PC-3 (cell line): ENCODE measurements at regions of chr4 and their contacts with region 1.

Region 1: DNA sequence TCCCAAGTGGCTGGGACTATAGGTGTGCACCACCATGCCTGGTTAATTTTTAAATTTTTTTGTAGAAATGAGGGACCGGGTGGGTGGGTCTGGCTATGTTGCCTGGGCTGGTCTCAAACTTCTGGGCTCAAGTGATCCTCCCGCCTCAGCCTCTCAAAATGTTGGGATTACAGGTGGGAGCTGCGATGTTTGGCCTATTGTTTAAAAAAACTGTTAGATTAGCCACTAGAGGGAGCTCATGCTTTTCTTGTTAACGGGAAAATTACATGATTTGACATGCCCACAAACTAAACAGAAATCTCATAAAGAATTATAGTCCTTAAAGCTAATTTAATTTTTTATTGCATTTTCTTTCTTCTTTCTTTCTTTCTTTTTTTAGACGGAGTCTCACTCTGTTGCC is 5.0 kb upstream of the SDAD1 start:
- DNase-seq: peak; percentile 73
- ATAC-seq: peak; percentile 35; the same call in 1 of the 2 replicates
- H3K4me3 ChIP-seq: no peak overlapping the region
- H3K27ac ChIP-seq: no peak overlapping the region
- H3K4me1 ChIP-seq: no peaks in the 10 kb centered on the region
- H3K27me3 ChIP-seq: no peaks in the 10 kb centered on the region
- CTCF ChIP-seq: peak; percentile 57

Region 2: DNA sequence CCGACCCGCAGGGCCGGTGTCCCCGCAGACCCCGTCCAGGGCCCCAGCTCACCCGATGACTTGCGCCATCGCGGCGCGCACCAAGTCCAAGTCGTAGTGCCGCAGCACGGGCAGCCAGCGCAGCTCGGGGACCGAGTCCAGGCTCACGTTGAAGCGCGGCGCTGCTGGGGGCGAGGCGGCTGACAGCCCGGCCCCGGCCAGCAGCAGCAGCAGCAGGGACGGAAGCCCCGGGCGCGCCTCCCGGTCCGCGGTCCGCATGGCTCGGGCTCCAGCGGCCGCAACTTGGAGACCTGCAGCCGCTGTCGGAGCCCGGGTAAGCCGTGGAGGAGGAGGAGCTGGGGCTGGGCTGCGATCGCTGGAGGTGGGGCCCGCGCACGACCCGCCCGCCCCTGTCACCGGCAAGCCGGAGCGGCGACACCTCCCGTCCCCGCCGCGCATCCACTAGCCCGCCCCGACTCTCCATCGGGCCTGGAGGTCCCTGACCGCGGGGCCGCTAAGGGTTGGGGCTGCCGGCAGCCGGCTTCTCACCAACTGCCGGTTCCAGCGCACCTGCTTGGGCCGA is 55.0 kb before region 1 on chr4 and contains the start of gene NAAA:
- CTCF ChIA-PET with region 1: interaction called, 15 read pairs
- POLR2A ChIA-PET with region 1: no interaction called
- intact Hi-C with region 1: no loop called
- DNase-seq: peak; percentile 55
- ATAC-seq: peak; percentile 87
- H3K4me3 ChIP-seq: peak within 1 kb of the TSS; percentile 98
- H3K27ac ChIP-seq: no peak within 1 kb of the TSS; the same call in 1 of the 2 replicates
- H3K4me1 ChIP-seq: no peaks in the 10 kb centered on the region
- H3K27me3 ChIP-seq: no peaks in the 10 kb centered on the region
- CTCF ChIP-seq: no peak
- total RNA-seq, gene NAAA: 21.9 and 48.6 TPM in 2 replicates

Region 3: DNA sequence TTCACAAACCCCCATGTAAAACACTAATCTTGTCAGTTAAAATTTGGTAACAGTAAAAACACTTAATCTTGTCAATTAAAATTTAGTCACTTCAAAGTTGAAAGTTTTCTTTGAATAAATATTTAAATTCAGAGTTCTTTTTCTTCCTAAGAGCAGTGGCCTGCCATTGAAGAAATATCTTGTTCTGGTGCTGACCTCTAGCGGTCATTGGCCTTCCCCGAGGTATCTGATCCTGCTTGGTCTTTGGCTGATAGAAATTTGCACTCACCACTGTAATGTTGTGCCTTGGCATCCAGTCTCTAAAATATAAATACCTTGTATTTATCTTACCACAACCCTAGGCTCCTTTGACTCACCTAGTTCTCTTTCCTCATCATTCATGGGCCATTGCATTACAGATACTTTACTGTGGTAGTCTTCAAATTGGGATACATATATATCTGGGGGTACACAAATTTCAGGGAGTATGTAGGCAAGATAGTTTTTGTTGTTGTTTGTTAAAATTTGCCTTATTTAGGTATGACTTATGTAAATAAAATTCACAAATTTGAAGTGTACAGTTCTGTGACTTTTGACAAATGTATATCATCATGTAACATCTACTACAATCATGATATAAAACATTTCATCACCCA is 72.0 kb after region 1 on chr4:
- CTCF ChIA-PET with region 1: interaction called, 6 read pairs
- POLR2A ChIA-PET with region 1: no interaction called
- intact Hi-C with region 1: loop called (anchors 1 kb)
- DNase-seq: peak; percentile 80
- ATAC-seq: peak; percentile 94
- H3K4me3 ChIP-seq: no peak overlapping the region
- H3K27ac ChIP-seq: no peak overlapping the region
- H3K4me1 ChIP-seq: no peaks in the 10 kb centered on the region
- H3K27me3 ChIP-seq: no peaks in the 10 kb centered on the region
- CTCF ChIP-seq: peak; percentile 80